Activated B cell treated with CpG ODN at 0.5 μM for 24 hours (primary cell): ENCODE measurements at regions of chr1 and their contacts with region 1.

Region 1: DNA sequence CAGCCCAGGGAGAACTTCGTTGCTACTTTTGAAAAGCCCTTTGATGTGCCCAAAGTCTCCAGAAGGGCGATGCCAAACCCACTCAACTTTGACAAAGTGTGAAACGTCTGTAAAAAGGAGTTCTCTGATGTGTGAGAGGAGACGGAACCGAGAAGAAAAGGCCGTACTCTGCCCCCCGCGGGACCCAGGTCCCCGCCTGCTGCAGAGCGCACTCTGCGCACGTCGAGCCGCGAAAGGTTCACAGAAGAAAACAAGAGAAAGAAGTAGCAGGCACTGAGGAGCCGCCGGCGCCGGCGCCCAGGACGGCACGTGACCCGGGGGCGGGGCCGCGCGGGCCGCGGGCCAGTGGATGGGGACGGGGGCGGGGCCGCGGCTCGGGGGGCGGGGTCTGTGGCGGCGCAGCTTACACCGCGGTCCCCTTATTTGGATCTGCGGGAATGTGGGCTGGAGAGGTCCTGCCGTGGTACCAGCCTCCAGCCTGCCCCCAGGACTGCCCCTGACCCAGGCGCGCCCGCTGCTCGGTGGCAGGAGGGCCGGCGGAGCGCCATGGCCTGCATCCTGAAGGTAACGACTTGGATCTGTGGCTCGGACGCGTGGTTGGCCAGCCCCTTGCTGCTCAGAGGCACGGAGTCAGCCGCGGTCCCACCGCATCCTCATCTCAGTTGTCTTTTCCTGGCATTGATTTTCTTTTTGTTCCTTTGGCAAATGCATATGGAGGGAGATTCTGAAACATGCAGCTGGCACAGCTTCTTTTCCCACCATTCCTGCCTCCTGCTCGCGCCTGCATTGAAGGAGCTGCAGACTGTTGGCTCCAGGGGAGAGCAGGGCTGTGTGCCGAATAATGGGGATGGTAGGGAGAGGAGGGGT is at the start of gene ST6GALNAC3:
- DNase-seq: peak; percentile 72
- ATAC-seq: peak; percentile 86
- H3K4me3 Mint-ChIP-seq: peak within 1 kb of the TSS; percentile 88
- H3K27ac Mint-ChIP-seq: peak within 1 kb of the TSS; percentile 81
- H3K4me1 Mint-ChIP-seq: peaks cover 35% of the 10 kb centered on the region
- H3K27me3 Mint-ChIP-seq: peaks cover 9% of the 10 kb centered on the region
- CTCF ChIP-seq: no peak
- total RNA-seq, gene ST6GALNAC3: 9.1 and 12.6 TPM in 2 replicates

Region 2: GRCh38 chr1:74197657-74198552 is 1876.6 kb before region 1 on chr1 and contains the starts of genes FPGT and LRRIQ3:
- CTCF ChIA-PET with region 1: no interaction called
- POLR2A ChIA-PET with region 1: no interaction called
- intact Hi-C with region 1: loop called (anchors 10 kb)
- DNase-seq: peak; percentile 94
- ATAC-seq: peak; percentile 96
- H3K4me3 Mint-ChIP-seq: peak within 1 kb of the TSS; percentile 87
- H3K27ac Mint-ChIP-seq: peak within 1 kb of the TSS; percentile 92
- H3K4me1 Mint-ChIP-seq: peaks cover 27% of the 10 kb centered on the region
- H3K27me3 Mint-ChIP-seq: no peaks in the 10 kb centered on the region
- CTCF ChIP-seq: no peak
- total RNA-seq, gene FPGT: 10.1 and 12.0 TPM in 2 replicates
- total RNA-seq, gene LRRIQ3: 1.00 and 1.5 TPM in 2 replicates

Region 3: GRCh38 chr1:76059451-76059850 is 15.1 kb before region 1 on chr1:
- CTCF ChIA-PET with region 1: no interaction called
- POLR2A ChIA-PET with region 1: no interaction called
- intact Hi-C with region 1: no loop called
- DNase-seq: no peak
- ATAC-seq: no peak
- H3K4me3 Mint-ChIP-seq: no peak overlapping the region
- H3K27ac Mint-ChIP-seq: no peak overlapping the region
- H3K4me1 Mint-ChIP-seq: no peaks in the 10 kb centered on the region
- H3K27me3 Mint-ChIP-seq: peaks cover 4% of the 10 kb centered on the region
- CTCF ChIP-seq: no peak

Region 4: DNA sequence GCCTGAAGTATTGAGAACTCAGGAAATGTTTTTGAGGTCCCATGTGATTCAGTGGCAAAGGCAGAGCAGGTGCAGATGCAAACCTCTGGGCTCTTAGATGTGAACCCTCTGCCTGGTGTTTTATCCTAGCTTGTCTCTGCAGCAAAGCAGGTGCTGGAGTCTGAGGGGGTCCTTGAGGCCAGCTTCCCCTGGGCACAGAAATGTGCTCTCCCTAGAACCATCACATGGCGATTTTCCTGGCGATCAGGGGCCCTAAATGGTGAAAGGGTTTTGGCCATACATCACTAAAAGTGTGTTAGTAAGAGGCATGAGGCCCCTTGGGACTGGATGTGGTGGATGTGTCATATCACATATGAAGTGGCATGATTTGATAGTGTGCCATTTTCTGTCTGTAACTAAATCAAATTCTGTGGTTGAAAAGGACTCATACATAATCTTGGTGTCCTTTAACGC is 144.8 kb after region 1 on chr1:
- CTCF ChIA-PET with region 1: no interaction called
- POLR2A ChIA-PET with region 1: no interaction called
- intact Hi-C with region 1: loop called (anchors 1 kb)
- DNase-seq: peak; percentile 37
- ATAC-seq: peak; percentile 89
- H3K4me3 Mint-ChIP-seq: peak overlapping the region; percentile 56
- H3K27ac Mint-ChIP-seq: peak overlapping the region; percentile 90
- H3K4me1 Mint-ChIP-seq: peaks cover 23% of the 10 kb centered on the region
- H3K27me3 Mint-ChIP-seq: no peaks in the 10 kb centered on the region
- CTCF ChIP-seq: no peak

Region 5: DNA sequence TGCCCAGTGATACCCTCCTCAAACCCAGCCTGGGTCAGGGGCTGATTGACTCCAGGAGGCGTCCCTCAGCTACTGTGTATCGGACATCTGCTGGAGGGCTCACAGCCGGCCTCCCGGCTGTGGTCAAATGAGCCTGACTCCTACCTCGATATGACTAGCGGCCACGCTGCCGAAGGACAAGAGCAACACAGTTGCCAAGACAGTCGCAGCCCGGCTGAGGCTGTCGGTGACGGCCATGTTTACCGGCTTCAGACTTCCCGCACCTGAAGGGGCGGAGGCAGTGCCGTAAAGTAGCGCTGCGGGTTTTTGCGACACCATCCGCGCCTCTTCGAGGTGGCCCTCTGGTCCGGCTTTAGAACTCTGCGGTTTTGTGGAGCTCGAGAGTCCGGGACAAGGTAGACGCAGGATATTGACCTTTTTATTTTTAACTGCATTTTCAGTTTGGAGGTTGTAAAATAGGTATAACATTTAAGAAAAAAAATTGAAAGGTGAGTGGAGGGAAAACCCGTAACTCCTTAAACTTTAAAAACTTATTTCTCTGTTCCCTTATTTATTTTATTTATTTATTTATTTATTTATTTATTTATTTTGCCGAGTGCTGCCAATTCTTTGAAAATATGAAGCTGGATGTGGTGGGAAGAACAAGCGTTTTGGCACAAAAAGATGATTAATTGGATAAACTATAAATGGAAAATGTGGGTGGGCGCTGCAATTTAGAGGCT is 1144.8 kb after region 1 on chr1 and contains the start of gene PIGK:
- CTCF ChIA-PET with region 1: no interaction called
- POLR2A ChIA-PET with region 1: no interaction called
- intact Hi-C with region 1: loop called (anchors 10 kb)
- DNase-seq: peak; percentile 77
- ATAC-seq: peak; percentile 98
- H3K4me3 Mint-ChIP-seq: peak within 1 kb of the TSS; percentile 95
- H3K27ac Mint-ChIP-seq: peak within 1 kb of the TSS; percentile 89
- H3K4me1 Mint-ChIP-seq: peaks cover 26% of the 10 kb centered on the region
- H3K27me3 Mint-ChIP-seq: no peaks in the 10 kb centered on the region
- CTCF ChIP-seq: no peak
- total RNA-seq, gene PIGK: 10.8 and 11.1 TPM in 2 replicates

Region 6: GRCh38 chr1:77978969-77979876 is 1904.7 kb after region 1 on chr1 and contains the start of gene FUBP1:
- CTCF ChIA-PET with region 1: no interaction called
- POLR2A ChIA-PET with region 1: no interaction called
- intact Hi-C with region 1: loop called (anchors 10 kb)
- DNase-seq: peak; percentile 81
- ATAC-seq: peak; percentile 74
- H3K4me3 Mint-ChIP-seq: no peak within 1 kb of the TSS
- H3K27ac Mint-ChIP-seq: no peak within 1 kb of the TSS
- H3K4me1 Mint-ChIP-seq: peaks cover 31% of the 10 kb centered on the region
- H3K27me3 Mint-ChIP-seq: no peaks in the 10 kb centered on the region
- CTCF ChIP-seq: no peak
- total RNA-seq, gene FUBP1: 259 and 282 TPM in 2 replicates